Gastrocnemius medialis (tissue), 4 donors: ENCODE measurements at regions of chr17 and their contacts with region 1.

Region 1: GRCh38 chr17:78307872-78308638 is 51.8 kb downstream of the SOCS3 start:
- DNase-seq: peak; percentile 52 to 70
- ATAC-seq: peak; percentile 84 to 90
- H3K4me3 ChIP-seq: no peak overlapping the region
- H3K27ac ChIP-seq: peak overlapping the region; percentile 80 to 85 (median 84)
- H3K4me1 ChIP-seq: peaks cover 14 to 21% of the 10 kb centered on the region in 2 donors
- H3K27me3 ChIP-seq: no peaks in the 10 kb centered on the region
- CTCF ChIP-seq: peak; percentile 32 to 58 (median 49)
- POLR2A ChIP-seq: no peak

Region 2: DNA sequence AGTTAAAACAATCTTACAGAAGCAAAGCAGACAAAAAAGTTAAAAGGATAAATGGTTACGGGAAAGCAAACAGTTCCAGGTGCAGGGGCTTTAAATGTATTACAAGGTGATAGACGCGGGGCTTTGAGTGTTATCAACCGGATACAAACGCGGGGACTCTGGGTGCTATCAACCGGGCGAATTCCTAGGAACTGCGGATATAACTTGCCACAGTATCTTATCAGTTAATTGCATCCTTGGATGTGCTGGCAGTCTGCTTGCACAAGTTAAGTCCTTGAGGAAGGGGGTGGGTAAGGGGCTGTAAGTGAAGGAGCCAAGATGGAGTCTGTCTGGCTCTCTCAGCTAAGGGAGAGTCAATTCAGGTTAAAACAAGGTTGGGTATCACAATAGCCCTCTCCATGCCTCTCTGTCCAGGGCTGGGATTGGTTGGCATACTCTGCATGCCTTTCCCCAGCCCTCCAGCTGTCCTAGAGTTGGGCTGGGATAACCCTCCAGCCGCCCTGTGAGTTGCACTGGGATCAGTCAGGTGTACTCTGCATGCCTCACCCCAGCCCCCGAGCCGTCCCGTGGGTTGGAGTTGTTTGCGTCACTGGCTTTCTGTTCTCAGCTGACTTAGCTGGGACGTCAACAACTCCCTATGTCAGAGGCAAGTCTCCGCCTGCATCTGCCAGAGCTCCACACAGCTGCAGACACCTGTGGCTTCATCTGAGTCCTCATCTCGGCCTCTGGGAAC is 35.7 kb before region 1 on chr17:
- in situ Hi-C with region 1: no loop called
- intact Hi-C with region 1: no loop called
- DNase-seq: peak; percentile 27 to 61
- ATAC-seq: peak; percentile 57 to 68
- H3K4me3 ChIP-seq: peak overlapping the region in 1 of 4 donors; percentile 1
- H3K27ac ChIP-seq: peak overlapping the region in 1 of 4 donors; percentile 64
- H3K4me1 ChIP-seq: peaks cover 0 to 5% of the 10 kb centered on the region in 2 donors
- H3K27me3 ChIP-seq: peaks cover 9 to 19% (median 18%) of the 10 kb centered on the region in 3 donors
- CTCF ChIP-seq: no peak
- POLR2A ChIP-seq: peak; percentile 23 to 67

Region 3: GRCh38 chr17:78289802-78290363 is 18.2 kb before region 1 on chr17:
- in situ Hi-C with region 1: no loop called
- intact Hi-C with region 1: loop called (anchors 2 kb)
- DNase-seq: peak; percentile 61 to 72
- ATAC-seq: peak; percentile 86 to 93
- H3K4me3 ChIP-seq: no peak overlapping the region
- H3K27ac ChIP-seq: no peak overlapping the region
- H3K4me1 ChIP-seq: peaks cover 4 to 13% of the 10 kb centered on the region in 2 donors
- H3K27me3 ChIP-seq: no peaks in the 10 kb centered on the region
- CTCF ChIP-seq: peak; percentile 71 to 84 (median 77)
- POLR2A ChIP-seq: no peak